SK-N-SH (cell line): ENCODE measurements at regions of chr1 and their contacts with region 1.

Region 1: DNA sequence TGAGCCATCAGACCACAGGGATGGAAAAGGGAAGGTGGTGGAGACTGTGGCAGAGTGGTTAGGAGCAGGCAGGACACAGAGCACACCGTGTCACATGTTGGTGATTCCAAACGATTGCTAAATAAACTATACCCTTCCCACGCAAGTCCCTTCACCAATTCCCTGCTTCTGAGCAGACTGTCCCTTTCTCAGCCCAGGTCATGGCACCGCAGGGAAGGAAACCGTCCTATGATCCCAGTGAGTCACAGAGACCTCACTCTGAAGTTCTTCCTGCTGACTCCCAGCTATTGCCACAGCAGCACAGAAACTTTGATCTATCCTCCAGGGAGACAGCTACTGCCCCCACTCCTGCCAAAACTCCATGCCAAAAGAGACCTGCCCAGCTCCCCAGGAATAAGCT is 19.2 kb downstream of the RIMS3 start:
- DNase-seq: no peak
- H3K4me3 ChIP-seq: no peak overlapping the region
- H3K27ac ChIP-seq: no peak overlapping the region
- H3K4me1 ChIP-seq: peaks cover 0 to 7% of the 10 kb centered on the region in 2 experiments; a peak in 1 of 4 replicates
- H3K27me3 ChIP-seq: no peaks in the 10 kb centered on the region
- CTCF ChIP-seq: no peak
- EP300 ChIP-seq: no peak
- RAD21 ChIP-seq: no peak

Region 2: GRCh38 chr1:40606194-40606593 is 40.1 kb before region 1 on chr1:
- CTCF ChIA-PET with region 1: no interaction called
- POLR2A ChIA-PET with region 1: no interaction called
- DNase-seq: no peak
- H3K4me3 ChIP-seq: no peak overlapping the region
- H3K27ac ChIP-seq: no peak overlapping the region
- H3K4me1 ChIP-seq: no peaks in the 10 kb centered on the region
- H3K27me3 ChIP-seq: no peaks in the 10 kb centered on the region; the same call in 1 of the 2 replicates
- CTCF ChIP-seq: no peak
- EP300 ChIP-seq: no peak
- RAD21 ChIP-seq: no peak

Region 3: DNA sequence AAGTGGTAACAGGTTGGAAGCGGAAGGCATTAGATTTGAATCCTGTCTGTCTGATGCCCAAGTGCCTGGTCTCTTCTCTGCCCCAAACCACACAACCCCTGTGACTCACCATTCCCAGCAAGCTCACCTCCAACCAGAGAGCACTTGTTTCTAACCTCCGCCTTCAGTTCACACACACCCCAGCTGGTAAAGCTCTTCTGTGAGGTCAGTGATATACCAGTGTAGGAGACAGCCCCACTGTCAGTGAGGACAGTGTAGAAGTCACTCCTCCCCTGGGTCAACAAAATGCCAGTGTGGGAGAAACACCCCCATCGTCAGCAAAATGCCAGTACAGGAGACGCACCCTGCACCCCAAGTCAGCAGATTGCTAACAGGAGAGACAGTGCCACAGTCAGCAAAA is 16.5 kb after region 1 on chr1:
- CTCF ChIA-PET with region 1: interaction called, 7 read pairs
- POLR2A ChIA-PET with region 1: interaction called, 11 read pairs
- DNase-seq: no peak
- H3K4me3 ChIP-seq: peak overlapping the region in 1 of 2 experiments; percentile 17; a peak in 1 of 4 replicates
- H3K27ac ChIP-seq: peak overlapping the region in 1 of 2 experiments; percentile 96; a peak in 2 of 4 replicates
- H3K4me1 ChIP-seq: peaks cover 15 to 47% of the 10 kb centered on the region in 2 experiments; a peak in 2 of 4 replicates
- H3K27me3 ChIP-seq: no peaks in the 10 kb centered on the region
- CTCF ChIP-seq: no peak
- EP300 ChIP-seq: no peak
- RAD21 ChIP-seq: no peak